Psoas muscle (tissue), 8 donors: ENCODE measurements at regions of chr5 and their contacts with region 1.

Region 1: DNA sequence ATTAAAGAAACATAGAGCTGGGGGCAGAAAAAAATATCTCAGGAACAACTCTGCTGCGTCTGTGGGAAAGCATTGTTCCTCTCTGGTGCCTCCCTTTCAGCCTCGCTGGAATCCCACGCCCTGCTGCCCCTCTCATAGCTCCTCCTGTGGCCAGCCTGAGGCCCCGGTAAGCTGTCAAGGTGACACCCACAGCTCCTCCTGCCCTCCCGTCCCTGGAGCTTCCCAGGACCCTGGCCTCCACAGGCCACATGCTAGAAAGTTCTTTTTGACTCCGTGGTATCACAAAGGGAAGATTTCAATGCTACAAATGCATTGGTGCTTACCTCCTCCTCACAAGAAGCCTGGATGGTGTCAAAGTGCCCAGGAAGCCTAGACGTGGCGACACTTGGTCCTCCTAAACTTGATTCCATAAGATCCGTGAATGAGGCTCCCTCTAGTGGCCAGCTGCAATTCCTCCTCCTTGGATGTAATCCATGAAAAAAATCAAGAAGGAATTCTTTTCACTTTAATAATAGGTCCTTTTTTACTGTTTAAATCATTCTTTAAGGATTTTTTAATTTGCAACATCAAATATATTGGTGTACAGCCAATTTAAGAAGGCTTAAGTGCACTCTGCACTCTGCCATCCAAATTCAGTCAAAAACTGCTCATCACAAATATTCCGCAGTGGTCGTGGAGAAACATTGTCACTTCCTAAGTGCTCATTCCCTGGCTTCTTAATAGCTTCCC is 104.9 kb downstream of the CFAP90 start:
- DNase-seq: peak; percentile 50 to 80
- ATAC-seq: peak; percentile 67 to 88 (median 76)
- H3K4me3 ChIP-seq: no peak overlapping the region
- H3K27ac ChIP-seq: no peak overlapping the region
- H3K4me1 ChIP-seq: no peaks in the 10 kb centered on the region
- H3K27me3 ChIP-seq: no peaks in the 10 kb centered on the region
- CTCF ChIP-seq: peak; percentile 90

Region 2: DNA sequence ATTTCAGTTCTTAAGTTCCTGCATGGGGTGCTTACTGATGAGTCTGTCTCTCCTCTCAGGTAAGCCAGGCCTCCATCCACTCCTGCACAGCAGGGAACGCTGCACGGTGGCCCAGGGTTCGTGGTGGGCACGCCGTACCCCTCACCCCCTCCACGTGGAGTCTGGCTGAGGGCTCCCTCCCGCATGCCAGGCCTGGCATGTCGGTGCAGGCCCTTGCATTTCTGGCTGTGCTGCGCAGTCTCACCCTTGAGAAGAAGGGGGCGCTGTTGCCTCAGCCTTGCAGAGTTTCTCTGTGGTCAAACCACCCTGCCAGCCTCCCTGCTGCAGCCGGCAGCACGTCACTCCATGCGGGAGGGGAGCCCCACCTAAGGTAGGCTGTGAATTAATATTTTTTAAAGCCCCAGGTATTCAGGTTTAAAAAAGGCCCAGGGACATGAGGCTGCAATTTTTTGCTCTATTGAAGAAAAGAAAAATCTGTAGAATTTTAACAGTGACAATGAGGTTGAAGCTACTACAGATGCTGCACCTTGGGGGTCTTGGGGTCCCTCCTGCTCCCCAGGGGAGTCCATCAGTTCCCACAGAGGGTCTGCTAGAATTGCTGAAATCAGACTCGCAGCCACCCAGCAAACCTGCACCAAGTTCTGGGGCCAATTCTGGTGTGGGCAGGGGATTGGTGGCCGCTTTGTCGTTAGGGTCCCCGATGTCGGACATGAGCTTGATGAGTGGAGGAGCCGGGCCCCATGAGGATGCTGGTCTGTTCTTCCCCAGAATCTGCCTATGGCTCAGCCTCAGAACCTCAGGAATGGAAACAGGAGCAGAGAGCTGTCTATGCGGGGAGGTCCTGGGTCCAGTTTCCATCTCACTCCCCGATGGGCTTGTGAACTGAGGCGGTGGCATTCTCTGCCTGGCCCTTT is 980.2 kb before region 1 on chr5:
- intact Hi-C with region 1: loop called in 1 of 2 experiments (anchors 5 kb)
- DNase-seq: peak; percentile 73 to 83
- ATAC-seq: peak; percentile 59 to 83 (median 72)
- H3K4me3 ChIP-seq: peak overlapping the region; percentile 16
- H3K27ac ChIP-seq: peak overlapping the region; percentile 85
- H3K4me1 ChIP-seq: peaks cover 20% of the 10 kb centered on the region
- H3K27me3 ChIP-seq: no peaks in the 10 kb centered on the region
- CTCF ChIP-seq: peak; percentile 73

Region 3: DNA sequence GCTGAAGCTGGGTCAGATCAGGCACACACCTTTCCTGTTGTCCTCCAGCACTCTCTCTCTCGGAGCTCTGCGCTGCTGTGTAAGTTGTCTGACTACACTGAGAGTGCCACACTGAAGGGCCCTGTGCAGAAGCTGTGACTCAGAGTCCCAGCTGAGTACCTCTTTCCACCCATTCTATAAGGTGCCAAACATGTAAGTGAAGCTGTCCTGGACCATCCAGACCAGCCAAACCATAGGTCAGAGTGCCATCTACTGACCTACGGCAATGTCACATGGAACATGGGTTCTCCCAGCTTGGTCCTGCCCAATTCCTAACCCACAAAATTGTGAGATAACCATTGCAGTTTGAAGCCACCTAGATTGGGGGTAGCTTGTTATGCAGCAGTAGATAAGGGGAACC is 281.9 kb before region 1 on chr5:
- intact Hi-C with region 1: loop called in 1 of 2 experiments (anchors 10 kb)
- DNase-seq: peak in 1 of 2 donors; percentile 57
- ATAC-seq: peak; percentile 89 to 97 (median 96)
- H3K4me3 ChIP-seq: no peak overlapping the region
- H3K27ac ChIP-seq: no peak overlapping the region
- H3K4me1 ChIP-seq: peaks cover 21% of the 10 kb centered on the region
- H3K27me3 ChIP-seq: no peaks in the 10 kb centered on the region
- CTCF ChIP-seq: no peak

Region 4: DNA sequence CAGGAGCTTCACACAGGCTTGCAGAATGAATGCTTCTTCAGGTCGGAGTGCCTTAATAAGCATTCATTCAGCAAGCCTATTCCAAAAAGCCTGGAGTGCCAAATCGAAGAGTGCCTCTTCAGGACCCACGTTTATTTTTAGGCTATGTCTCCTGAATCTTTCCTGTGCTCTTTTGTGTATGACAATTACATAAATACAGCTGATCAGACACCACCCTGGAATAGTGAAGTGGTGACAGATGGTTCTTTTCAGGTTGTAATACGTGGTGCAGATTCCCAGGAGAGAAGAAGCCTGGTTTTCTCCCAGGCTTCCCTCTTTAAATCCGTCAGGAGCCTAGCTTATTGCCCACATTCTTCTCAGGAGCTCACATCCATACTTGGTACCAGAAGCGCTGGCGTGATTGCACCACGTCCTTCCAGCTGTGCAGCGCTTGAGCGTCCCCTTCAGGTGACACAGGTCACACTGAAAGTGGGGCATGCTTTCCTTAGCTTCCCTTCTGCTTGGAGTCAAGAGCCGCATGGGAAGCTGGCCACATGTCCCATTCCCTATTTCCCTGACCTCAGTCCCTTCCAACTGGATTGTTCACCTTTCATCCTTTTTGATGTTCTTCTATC is 227.0 kb before region 1 on chr5:
- intact Hi-C with region 1: loop called in 1 of 2 experiments (anchors 10 kb)
- DNase-seq: peak; percentile 55 to 81
- ATAC-seq: peak; percentile 86 to 96 (median 94)
- H3K4me3 ChIP-seq: no peak overlapping the region
- H3K27ac ChIP-seq: peak overlapping the region; percentile 51
- H3K4me1 ChIP-seq: peaks cover 12% of the 10 kb centered on the region
- H3K27me3 ChIP-seq: no peaks in the 10 kb centered on the region
- CTCF ChIP-seq: peak; percentile 69